Activated CD8-positive, alpha-beta T cell treated with anti-CD3 and anti-CD28 coated beads for 36 hours (primary cell): ENCODE measurements at regions of chr2 and their contacts with region 1.

Region 1: DNA sequence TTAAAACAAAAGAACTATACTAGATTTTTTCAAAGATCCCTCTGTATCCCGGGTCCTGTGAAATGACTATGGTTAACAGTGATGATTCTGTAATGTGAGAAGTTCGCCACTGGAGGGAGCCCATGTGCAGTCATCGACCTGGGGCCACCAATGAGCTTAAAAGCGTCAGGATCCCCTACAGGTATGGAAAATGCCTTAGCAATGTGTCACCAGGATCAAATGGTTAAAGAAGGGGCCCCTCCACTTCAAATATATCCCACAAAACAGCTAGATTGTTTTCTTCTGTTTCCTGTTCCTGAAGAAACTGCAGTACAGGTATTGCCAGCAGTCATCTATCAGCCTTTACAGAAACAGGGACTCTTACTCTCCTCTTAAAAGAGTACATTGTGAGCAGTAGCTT is 15.3 kb downstream of the CHRNA1 start:
- DNase-seq: peak; percentile 78
- ATAC-seq: peak; percentile 59
- H3K4me3 Mint-ChIP-seq: no peak overlapping the region
- H3K27ac Mint-ChIP-seq: no peak overlapping the region
- H3K4me1 Mint-ChIP-seq: peaks cover 42% of the 10 kb centered on the region
- H3K27me3 Mint-ChIP-seq: no peaks in the 10 kb centered on the region
- CTCF ChIP-seq: peak; percentile 79

Region 2: DNA sequence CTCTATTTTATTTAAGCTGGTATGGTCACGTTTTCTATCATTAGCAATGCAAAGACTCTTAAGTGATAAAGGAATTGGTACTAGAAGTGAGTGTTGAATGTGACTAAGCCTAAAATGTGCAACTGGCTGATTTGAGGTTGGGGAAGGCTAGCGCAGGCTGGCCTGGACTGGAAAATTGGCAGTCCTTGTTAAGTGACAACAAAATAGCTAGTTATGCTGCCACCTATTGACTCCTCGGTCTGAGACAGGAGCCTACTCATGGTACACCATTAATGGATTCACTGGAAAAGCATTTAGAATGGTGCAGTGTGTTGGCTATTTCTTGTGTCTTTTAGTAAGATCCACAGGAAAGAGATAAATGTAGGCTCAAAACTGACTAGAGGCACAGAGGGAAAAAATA is 145.7 kb before region 1 on chr2:
- CTCF ChIA-PET with region 1: no interaction called
- POLR2A ChIA-PET with region 1: no interaction called
- intact Hi-C with region 1: no loop called
- DNase-seq: peak; percentile 79
- ATAC-seq: peak; percentile 61
- H3K4me3 Mint-ChIP-seq: no peak overlapping the region
- H3K27ac Mint-ChIP-seq: peak overlapping the region; percentile 77
- H3K4me1 Mint-ChIP-seq: peaks cover 91% of the 10 kb centered on the region
- H3K27me3 Mint-ChIP-seq: no peaks in the 10 kb centered on the region
- CTCF ChIP-seq: peak; percentile 76

Region 3: DNA sequence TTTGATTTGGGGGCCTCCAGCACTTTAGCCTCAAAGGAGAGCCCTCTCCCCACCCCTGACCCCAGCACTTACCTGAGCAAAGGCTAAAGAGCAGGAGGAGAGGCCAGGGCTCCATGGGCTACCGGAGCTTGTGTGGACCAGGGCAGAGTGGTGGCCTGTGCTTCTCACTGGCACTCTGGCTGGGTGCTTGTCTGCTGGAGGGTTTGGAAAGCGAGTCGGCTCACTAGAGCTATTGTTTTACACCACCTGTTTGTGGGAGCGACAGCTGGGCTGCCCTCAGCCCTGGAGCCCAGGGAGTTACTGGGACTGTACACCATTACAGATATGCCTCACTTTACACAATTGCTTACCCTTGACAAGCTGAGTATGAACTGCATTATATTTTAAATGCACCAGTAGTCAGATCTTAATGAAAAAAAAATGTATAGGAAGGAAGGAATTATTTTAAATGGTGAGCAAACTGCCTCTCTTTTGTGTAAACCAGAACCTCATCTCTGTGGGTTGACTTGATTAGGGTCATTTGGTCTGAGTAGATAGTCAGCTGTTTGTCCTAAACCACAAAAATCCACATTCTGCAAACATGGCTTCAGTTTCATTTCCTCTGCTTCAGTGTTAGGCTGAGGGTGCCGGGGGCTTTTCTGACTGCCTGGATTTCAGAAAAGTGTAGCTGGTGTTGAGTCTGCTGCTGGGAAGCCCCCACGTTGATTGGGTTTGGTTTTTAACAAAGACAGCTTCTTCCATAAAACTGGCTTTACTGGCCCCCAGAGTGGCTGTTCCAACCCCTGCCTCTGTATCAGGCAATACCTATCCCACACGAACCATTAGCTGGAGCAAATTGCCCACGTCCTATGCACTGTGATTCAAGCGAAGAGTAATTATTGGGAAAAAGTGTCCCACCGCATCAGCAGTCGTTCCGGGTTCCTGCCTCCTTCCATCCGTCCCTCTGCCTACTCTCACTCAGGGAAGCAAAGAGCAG is 15.6 kb after region 1 on chr2 and contains the start of gene CHRNA1:
- CTCF ChIA-PET with region 1: interaction called, 32 read pairs
- POLR2A ChIA-PET with region 1: no interaction called
- intact Hi-C with region 1: no loop called
- DNase-seq: no peak
- ATAC-seq: no peak
- H3K4me3 Mint-ChIP-seq: no peak within 1 kb of the TSS
- H3K27ac Mint-ChIP-seq: no peak within 1 kb of the TSS
- H3K4me1 Mint-ChIP-seq: peaks cover 9% of the 10 kb centered on the region
- H3K27me3 Mint-ChIP-seq: no peaks in the 10 kb centered on the region
- CTCF ChIP-seq: no peak
- total RNA-seq, gene CHRNA1: not detected

Region 4: DNA sequence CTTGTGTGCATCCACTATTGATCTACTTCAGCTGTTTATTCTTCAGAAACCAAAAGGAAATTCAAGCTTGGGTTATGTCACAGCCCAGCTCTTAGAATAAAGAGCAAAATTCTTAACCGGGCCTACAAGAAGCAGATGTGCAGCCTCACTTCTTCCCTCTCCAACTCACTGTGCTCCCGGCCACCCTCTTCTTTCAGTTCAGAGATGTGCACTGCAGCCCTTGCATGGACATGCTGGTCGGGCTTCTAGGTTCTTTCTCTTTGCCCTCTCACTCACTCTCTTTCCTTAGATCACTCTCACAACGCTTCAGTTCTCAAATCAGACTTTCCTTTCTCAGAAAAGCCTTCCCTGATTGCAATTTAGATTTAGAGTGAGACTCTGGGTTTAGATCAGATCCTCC is 152.1 kb after region 1 on chr2:
- CTCF ChIA-PET with region 1: interaction called, 10 read pairs
- POLR2A ChIA-PET with region 1: no interaction called
- intact Hi-C with region 1: no loop called
- DNase-seq: no peak
- ATAC-seq: no peak
- H3K4me3 Mint-ChIP-seq: peak overlapping the region; percentile 9
- H3K27ac Mint-ChIP-seq: peak overlapping the region; percentile 47
- H3K4me1 Mint-ChIP-seq: peaks cover 24% of the 10 kb centered on the region
- H3K27me3 Mint-ChIP-seq: no peaks in the 10 kb centered on the region
- CTCF ChIP-seq: no peak

Region 5: DNA sequence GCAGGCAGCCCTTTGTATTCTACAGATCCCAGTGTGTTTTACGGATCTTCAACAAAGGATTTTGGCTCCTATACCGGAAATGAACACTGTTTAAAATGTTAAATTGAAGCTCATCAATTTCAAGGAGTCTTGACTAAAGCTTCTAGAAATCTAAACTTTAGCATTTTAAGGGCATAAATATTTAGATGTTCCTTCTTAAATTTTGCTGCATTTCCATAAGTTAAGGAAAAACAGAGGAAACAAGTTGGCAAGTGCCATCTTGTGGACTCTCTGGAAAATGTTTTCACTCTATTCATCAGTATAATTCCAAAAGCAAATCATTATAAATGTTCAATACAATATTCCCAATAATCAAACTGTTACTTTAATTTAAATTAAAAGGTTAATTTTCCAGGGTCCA is 236.7 kb after region 1 on chr2:
- CTCF ChIA-PET with region 1: interaction called, 36 read pairs
- POLR2A ChIA-PET with region 1: no interaction called
- intact Hi-C with region 1: loop called (anchors 5 kb)
- DNase-seq: no peak
- ATAC-seq: no peak
- H3K4me3 Mint-ChIP-seq: no peak overlapping the region
- H3K27ac Mint-ChIP-seq: no peak overlapping the region
- H3K4me1 Mint-ChIP-seq: peaks cover 6% of the 10 kb centered on the region
- H3K27me3 Mint-ChIP-seq: peaks cover 4% of the 10 kb centered on the region
- CTCF ChIP-seq: peak; percentile 41